Caco-2 (cell line): ENCODE measurements at regions of chr18 and their contacts with region 1.

Region 1: GRCh38 chr18:57803103-57803969 is at the start of gene ATP8B1:
- DNase-seq: peak; percentile 93 to 95
- H3K4me3 ChIP-seq: peak within 1 kb of the TSS; percentile 79
- H3K4me3 Mint-ChIP-seq: peak within 1 kb of the TSS; percentile 81
- H3K27ac Mint-ChIP-seq: peak within 1 kb of the TSS; percentile 83
- H3K4me1 ChIP-seq: no peaks in the 10 kb centered on the region
- H3K4me1 Mint-ChIP-seq: peaks cover 7% of the 10 kb centered on the region
- H3K27me3 ChIP-seq: no peaks in the 10 kb centered on the region
- H3K27me3 Mint-ChIP-seq: no peaks in the 10 kb centered on the region
- CTCF ChIP-seq: no peak
- total RNA-seq, gene ATP8B1: 31.6 and 32.0 TPM in 2 replicates

Region 2: GRCh38 chr18:57715681-57716080 is 87.7 kb before region 1 on chr18:
- CTCF ChIA-PET with region 1: no interaction called
- POLR2A ChIA-PET with region 1: no interaction called
- intact Hi-C with region 1: loop called (anchors 5 kb)
- DNase-seq: no peak
- H3K4me3 ChIP-seq: no peak overlapping the region
- H3K4me3 Mint-ChIP-seq: peak overlapping the region; percentile 38
- H3K27ac Mint-ChIP-seq: no peak overlapping the region
- H3K4me1 ChIP-seq: peaks cover 5% of the 10 kb centered on the region
- H3K4me1 Mint-ChIP-seq: peaks cover 15% of the 10 kb centered on the region
- H3K27me3 ChIP-seq: no peaks in the 10 kb centered on the region
- H3K27me3 Mint-ChIP-seq: no peaks in the 10 kb centered on the region
- CTCF ChIP-seq: no peak

Region 3: GRCh38 chr18:57748770-57749603 is 54.3 kb before region 1 on chr18:
- CTCF ChIA-PET with region 1: no interaction called
- POLR2A ChIA-PET with region 1: no interaction called
- intact Hi-C with region 1: loop called (anchors 5 kb)
- DNase-seq: no peak
- H3K4me3 ChIP-seq: no peak overlapping the region
- H3K4me3 Mint-ChIP-seq: no peak overlapping the region
- H3K27ac Mint-ChIP-seq: no peak overlapping the region
- H3K4me1 ChIP-seq: peaks cover 20% of the 10 kb centered on the region
- H3K4me1 Mint-ChIP-seq: peaks cover 7% of the 10 kb centered on the region
- H3K27me3 ChIP-seq: no peaks in the 10 kb centered on the region
- H3K27me3 Mint-ChIP-seq: no peaks in the 10 kb centered on the region
- CTCF ChIP-seq: no peak

Region 4: GRCh38 chr18:57759640-57760039 is 43.7 kb before region 1 on chr18:
- CTCF ChIA-PET with region 1: no interaction called
- POLR2A ChIA-PET with region 1: no interaction called
- intact Hi-C with region 1: loop called (anchors 5 kb)
- DNase-seq: no peak
- H3K4me3 ChIP-seq: no peak overlapping the region
- H3K4me3 Mint-ChIP-seq: no peak overlapping the region
- H3K27ac Mint-ChIP-seq: no peak overlapping the region
- H3K4me1 ChIP-seq: no peaks in the 10 kb centered on the region
- H3K4me1 Mint-ChIP-seq: peaks cover 5% of the 10 kb centered on the region
- H3K27me3 ChIP-seq: no peaks in the 10 kb centered on the region
- H3K27me3 Mint-ChIP-seq: no peaks in the 10 kb centered on the region
- CTCF ChIP-seq: no peak

Region 5: GRCh38 chr18:57833443-57834101 is 30.2 kb after region 1 on chr18:
- CTCF ChIA-PET with region 1: no interaction called
- POLR2A ChIA-PET with region 1: no interaction called
- intact Hi-C with region 1: loop called (anchors 2 kb)
- DNase-seq: peak; percentile 39 to 62
- H3K4me3 ChIP-seq: no peak overlapping the region
- H3K4me3 Mint-ChIP-seq: peak overlapping the region; percentile 36
- H3K27ac Mint-ChIP-seq: peak overlapping the region; percentile 48
- H3K4me1 ChIP-seq: peaks cover 13% of the 10 kb centered on the region; the same call in 1 of the 2 replicates
- H3K4me1 Mint-ChIP-seq: peaks cover 6% of the 10 kb centered on the region
- H3K27me3 ChIP-seq: no peaks in the 10 kb centered on the region
- H3K27me3 Mint-ChIP-seq: no peaks in the 10 kb centered on the region
- CTCF ChIP-seq: no peak

Region 6: GRCh38 chr18:57859314-57859713 is 56.0 kb after region 1 on chr18:
- CTCF ChIA-PET with region 1: no interaction called
- POLR2A ChIA-PET with region 1: interaction called, 3 read pairs
- intact Hi-C with region 1: loop called (anchors 5 kb)
- DNase-seq: peak; percentile 11 to 34
- H3K4me3 ChIP-seq: no peak overlapping the region
- H3K4me3 Mint-ChIP-seq: no peak overlapping the region
- H3K27ac Mint-ChIP-seq: no peak overlapping the region
- H3K4me1 ChIP-seq: peaks cover 5% of the 10 kb centered on the region; the same call in 1 of the 2 replicates
- H3K4me1 Mint-ChIP-seq: no peaks in the 10 kb centered on the region
- H3K27me3 ChIP-seq: no peaks in the 10 kb centered on the region
- H3K27me3 Mint-ChIP-seq: no peaks in the 10 kb centered on the region
- CTCF ChIP-seq: peak in 1 of 2 experiments; percentile 49